Naive thymus-derived CD4-positive, alpha-beta T cell (primary cell): ENCODE measurements at regions of chr1 and their contacts with region 1.

Region 1: GRCh38 chr1:155562581-155563376 is at the start of gene ASH1L:
- DNase-seq: peak; percentile 85 to 94 (median 90)
- ATAC-seq: peak; percentile 90
- H3K4me3 ChIP-seq: peak within 1 kb of the TSS; percentile 100
- H3K4me3 Mint-ChIP-seq: peak within 1 kb of the TSS; percentile 91 to 100 (median 98)
- H3K27ac ChIP-seq: peak within 1 kb of the TSS; percentile 86
- H3K27ac Mint-ChIP-seq: peak within 1 kb of the TSS; percentile 95 to 100 (median 98)
- H3K4me1 ChIP-seq: peaks cover 26 to 32% of the 10 kb centered on the region in 2 donors
- H3K4me1 Mint-ChIP-seq: peaks cover 15 to 56% (median 47%) of the 10 kb centered on the region in 7 donors
- H3K27me3 ChIP-seq: no peaks in the 10 kb centered on the region
- H3K27me3 Mint-ChIP-seq: peaks cover 0 to 4% (median 0%) of the 10 kb centered on the region in 5 donors
- total RNA-seq, gene ASH1L: 57.2 to 109 (median 95.1) TPM

Region 2: GRCh38 chr1:154837672-154838171 is 725.1 kb before region 1 on chr1:
- CTCF ChIA-PET with region 1: no interaction called
- POLR2A ChIA-PET with region 1: no interaction called
- intact Hi-C with region 1: no loop called
- DNase-seq: no peak
- ATAC-seq: no peak
- H3K4me3 ChIP-seq: no peak overlapping the region
- H3K4me3 Mint-ChIP-seq: no peak overlapping the region
- H3K27ac ChIP-seq: no peak overlapping the region
- H3K27ac Mint-ChIP-seq: no peak overlapping the region
- H3K4me1 ChIP-seq: no peaks in the 10 kb centered on the region
- H3K4me1 Mint-ChIP-seq: peaks cover 0 to 11% (median 5%) of the 10 kb centered on the region in 7 donors
- H3K27me3 ChIP-seq: no peaks in the 10 kb centered on the region
- H3K27me3 Mint-ChIP-seq: peaks cover 0 to 3% (median 0%) of the 10 kb centered on the region in 5 donors

Region 3: DNA sequence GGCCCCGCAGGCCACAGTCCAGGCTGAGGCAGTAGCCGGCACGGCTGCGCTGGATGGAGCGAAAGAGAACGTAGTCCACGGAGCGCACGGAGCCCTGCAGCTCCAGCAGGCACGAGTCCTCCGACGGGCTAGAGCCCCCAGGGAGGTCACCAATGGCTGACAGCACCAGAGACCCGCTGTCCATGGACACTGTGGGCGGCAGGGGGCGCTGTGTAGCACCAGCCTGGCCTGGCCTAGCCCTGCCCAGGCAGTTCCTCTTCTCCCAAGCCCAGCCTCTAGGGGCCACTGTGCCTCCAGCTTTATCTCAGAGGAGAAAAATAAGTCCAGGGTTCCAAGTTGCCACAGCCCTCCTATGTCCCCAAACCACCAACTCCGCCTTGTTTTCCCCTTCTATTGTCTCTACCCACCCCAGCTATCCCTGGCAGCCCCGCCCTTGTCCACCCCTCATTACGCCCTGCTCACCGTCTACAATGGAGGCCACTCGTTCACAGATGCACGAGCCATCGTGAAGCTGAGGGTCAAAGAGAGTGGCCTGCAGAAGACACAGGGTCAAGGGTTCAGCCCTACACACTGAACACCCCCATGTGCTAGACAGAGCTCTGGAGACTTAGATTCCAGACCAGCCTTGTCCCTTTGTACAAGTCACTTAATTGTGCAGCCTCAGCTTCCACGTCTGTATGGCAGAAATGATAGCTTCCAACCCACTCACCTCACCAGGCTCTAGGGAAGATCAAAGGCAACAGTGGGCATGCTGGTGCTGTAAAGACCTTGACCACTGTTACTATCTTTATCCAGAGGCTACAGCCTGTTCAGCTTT is 311.9 kb before region 1 on chr1:
- CTCF ChIA-PET with region 1: no interaction called
- POLR2A ChIA-PET with region 1: no interaction called
- intact Hi-C with region 1: loop called in 1 of 2 experiments (anchors 1 kb)
- DNase-seq: peak; percentile 86 to 98 (median 93)
- ATAC-seq: peak; percentile 99
- H3K4me3 ChIP-seq: peak overlapping the region; percentile 54
- H3K4me3 Mint-ChIP-seq: peak overlapping the region in 9 of 10 donors; percentile 45 to 83 (median 62)
- H3K27ac ChIP-seq: peak overlapping the region; percentile 49
- H3K27ac Mint-ChIP-seq: peak overlapping the region in 7 of 9 donors; percentile 29 to 86 (median 69)
- H3K4me1 ChIP-seq: peaks cover 4 to 10% of the 10 kb centered on the region in 2 donors
- H3K4me1 Mint-ChIP-seq: peaks cover 21 to 36% (median 24%) of the 10 kb centered on the region in 7 donors
- H3K27me3 ChIP-seq: no peaks in the 10 kb centered on the region
- H3K27me3 Mint-ChIP-seq: no peaks in the 10 kb centered on the region

Region 4: DNA sequence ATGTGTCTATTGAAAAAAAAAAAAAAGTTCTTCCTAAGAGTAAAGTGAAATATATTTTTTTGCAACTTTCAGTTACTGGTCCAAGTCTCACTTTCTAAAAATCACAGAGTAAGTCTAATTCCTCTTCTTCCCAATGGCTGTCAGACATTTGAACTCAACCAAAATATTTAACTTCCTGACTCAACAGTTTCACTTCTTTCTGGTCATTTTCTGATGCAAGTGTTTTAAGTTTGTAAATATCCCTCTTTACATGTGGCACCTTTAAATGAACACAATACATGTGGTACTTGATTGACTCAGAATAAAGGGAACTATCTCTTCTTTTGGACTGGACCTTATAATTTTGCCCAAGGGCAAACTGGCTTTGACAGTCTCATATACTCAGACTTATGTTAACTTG is 76.8 kb before region 1 on chr1:
- CTCF ChIA-PET with region 1: no interaction called
- POLR2A ChIA-PET with region 1: no interaction called
- intact Hi-C with region 1: no loop called
- DNase-seq: no peak
- ATAC-seq: peak; percentile 46
- H3K4me3 ChIP-seq: no peak overlapping the region
- H3K4me3 Mint-ChIP-seq: no peak overlapping the region
- H3K27ac ChIP-seq: no peak overlapping the region
- H3K27ac Mint-ChIP-seq: peak overlapping the region in 4 of 9 donors; percentile 7 to 63 (median 23)
- H3K4me1 ChIP-seq: no peaks in the 10 kb centered on the region
- H3K4me1 Mint-ChIP-seq: peaks cover 9 to 34% (median 15%) of the 10 kb centered on the region in 7 donors
- H3K27me3 ChIP-seq: no peaks in the 10 kb centered on the region
- H3K27me3 Mint-ChIP-seq: no peaks in the 10 kb centered on the region

Region 5: DNA sequence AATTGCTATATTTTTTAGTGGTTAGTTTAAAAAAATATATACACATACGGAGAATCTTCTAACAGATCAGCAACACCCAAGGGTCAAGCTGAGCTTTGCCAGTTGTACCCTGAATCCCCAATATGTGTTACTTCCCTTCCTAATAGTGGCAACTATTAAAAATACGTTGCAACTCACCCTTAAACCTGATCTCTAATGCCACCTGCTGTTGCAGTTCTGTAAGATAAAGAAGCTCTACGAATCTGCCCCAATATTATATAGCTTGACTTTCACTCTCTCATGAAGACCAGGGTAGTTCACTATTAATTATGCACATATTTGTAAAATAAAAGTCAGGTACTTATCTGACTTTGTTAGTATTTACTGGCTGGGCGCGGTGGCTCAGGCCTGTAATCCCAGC is 58.6 kb before region 1 on chr1:
- CTCF ChIA-PET with region 1: no interaction called
- POLR2A ChIA-PET with region 1: no interaction called
- intact Hi-C with region 1: loop called in 1 of 2 experiments (anchors 5 kb)
- DNase-seq: peak in 2 of 9 donors; percentile 5 to 30
- ATAC-seq: peak; percentile 71
- H3K4me3 ChIP-seq: no peak overlapping the region
- H3K4me3 Mint-ChIP-seq: no peak overlapping the region
- H3K27ac ChIP-seq: no peak overlapping the region
- H3K27ac Mint-ChIP-seq: peak overlapping the region in 3 of 9 donors; percentile 10 to 32 (median 14)
- H3K4me1 ChIP-seq: peaks cover 0 to 18% of the 10 kb centered on the region in 2 donors
- H3K4me1 Mint-ChIP-seq: peaks cover 31 to 61% (median 50%) of the 10 kb centered on the region in 7 donors
- H3K27me3 ChIP-seq: no peaks in the 10 kb centered on the region
- H3K27me3 Mint-ChIP-seq: no peaks in the 10 kb centered on the region

Region 6: DNA sequence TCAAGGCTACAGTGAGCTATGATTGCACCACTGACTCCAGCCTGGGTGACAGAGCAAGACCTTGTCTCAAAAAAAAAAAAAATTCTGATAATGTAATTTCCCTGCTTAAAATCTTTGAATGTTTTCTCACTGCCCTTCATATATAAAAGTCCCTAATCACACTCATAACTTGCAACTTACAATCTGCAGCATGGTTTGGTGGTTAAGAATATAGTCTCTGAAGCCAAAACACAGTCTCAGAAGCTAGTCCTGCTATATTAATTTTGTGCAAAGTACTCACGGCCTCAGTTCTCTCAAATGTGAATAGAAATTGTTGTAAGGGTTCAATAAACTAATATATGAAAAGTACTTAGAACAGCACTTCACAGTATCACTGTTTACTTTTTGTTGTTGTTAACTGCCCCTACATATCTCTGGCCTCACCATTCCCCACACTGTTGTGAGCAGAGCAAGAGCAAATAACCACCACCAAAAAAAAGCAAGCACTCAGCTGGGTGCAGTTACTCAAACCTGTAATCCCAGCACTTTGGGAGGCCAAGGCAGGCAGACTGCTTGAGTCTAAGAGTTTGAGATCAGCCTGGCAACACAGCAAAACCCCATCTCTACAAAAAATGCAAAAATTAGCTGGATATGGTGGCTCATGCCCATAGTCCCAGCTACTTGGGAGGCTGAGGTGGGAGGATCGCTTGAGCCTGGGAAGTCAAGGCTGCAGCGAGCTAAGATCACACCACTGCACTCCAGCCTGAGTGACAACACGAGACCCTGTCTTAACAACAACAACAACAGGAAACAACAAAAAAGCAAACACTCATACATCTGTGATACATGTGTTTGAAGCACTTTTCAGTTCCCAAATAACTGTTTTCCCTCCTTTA is 22.5 kb before region 1 on chr1:
- CTCF ChIA-PET with region 1: no interaction called
- POLR2A ChIA-PET with region 1: interaction called, 3 read pairs
- intact Hi-C with region 1: loop called in 1 of 2 experiments (anchors 1 kb)
- DNase-seq: no peak
- ATAC-seq: peak; percentile 27
- H3K4me3 ChIP-seq: no peak overlapping the region
- H3K4me3 Mint-ChIP-seq: peak overlapping the region in 7 of 10 donors; percentile 15 to 76 (median 46)
- H3K27ac ChIP-seq: peak overlapping the region; percentile 61
- H3K27ac Mint-ChIP-seq: peak overlapping the region; percentile 60 to 93 (median 81)
- H3K4me1 ChIP-seq: peaks cover 26 to 30% of the 10 kb centered on the region in 2 donors
- H3K4me1 Mint-ChIP-seq: peaks cover 40 to 65% (median 52%) of the 10 kb centered on the region in 7 donors
- H3K27me3 ChIP-seq: no peaks in the 10 kb centered on the region
- H3K27me3 Mint-ChIP-seq: no peaks in the 10 kb centered on the region

Region 7: DNA sequence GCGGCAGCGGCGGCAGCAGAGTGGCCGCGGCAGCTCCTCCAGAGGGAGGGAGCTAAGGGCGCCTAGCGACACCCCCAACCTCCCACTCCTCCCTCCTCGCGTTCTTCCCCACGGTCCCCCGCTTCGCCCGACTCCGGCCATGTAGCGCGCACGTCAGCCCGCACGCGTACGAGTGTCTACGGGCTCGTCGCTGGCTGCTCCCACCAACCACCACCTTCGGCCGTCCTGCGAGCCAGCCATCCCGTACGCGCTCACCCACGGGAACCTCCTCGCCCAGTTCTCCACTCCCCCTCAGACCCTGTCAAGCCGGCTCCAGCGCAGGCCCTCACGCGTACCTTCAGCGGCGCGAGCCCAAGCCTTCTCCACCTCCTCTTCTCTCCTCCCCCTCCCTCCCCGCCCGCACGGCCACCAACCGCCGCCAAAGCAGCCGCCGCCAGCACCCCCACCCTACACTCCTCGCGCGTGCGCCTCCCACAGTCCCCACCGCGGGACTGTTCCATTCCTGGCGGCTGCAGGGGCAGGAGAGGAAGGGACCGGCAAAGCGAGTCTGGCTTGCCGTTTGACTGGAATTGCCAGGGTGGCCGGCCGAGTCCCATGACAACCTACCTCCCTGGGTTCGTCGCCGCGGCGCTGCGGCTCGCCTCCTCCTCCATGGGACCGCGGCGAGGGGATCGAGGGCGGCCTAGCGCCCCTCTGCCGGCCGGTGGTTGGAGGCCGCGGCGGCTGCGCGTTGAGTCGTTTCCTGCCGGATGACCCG is 125.7 kb after region 1 on chr1 and contains the start of gene YY1AP1:
- CTCF ChIA-PET with region 1: no interaction called
- POLR2A ChIA-PET with region 1: no interaction called
- intact Hi-C with region 1: loop called (anchors 1 to 2 kb)
- DNase-seq: peak; percentile 87 to 96 (median 92)
- ATAC-seq: peak; percentile 96
- H3K4me3 ChIP-seq: peak within 1 kb of the TSS; percentile 99
- H3K4me3 Mint-ChIP-seq: peak within 1 kb of the TSS; percentile 93 to 98 (median 96)
- H3K27ac ChIP-seq: peak within 1 kb of the TSS; percentile 91
- H3K27ac Mint-ChIP-seq: peak within 1 kb of the TSS; percentile 90 to 98 (median 96)
- H3K4me1 ChIP-seq: peaks cover 15 to 30% of the 10 kb centered on the region in 2 donors
- H3K4me1 Mint-ChIP-seq: peaks cover 37 to 81% (median 70%) of the 10 kb centered on the region in 7 donors
- H3K27me3 ChIP-seq: no peaks in the 10 kb centered on the region
- H3K27me3 Mint-ChIP-seq: no peaks in the 10 kb centered on the region
- total RNA-seq, gene YY1AP1: 81.2 to 130 (median 88.2) TPM